ENCODE measurements at regions of chr11 and their contacts with region 1.

Region 1: GRCh38 chr11:85828008-85828847 is 17.3 kb upstream of the SYTL2 start:
- DNase-seq: no peak
- H3K4me3 Mint-ChIP-seq: no peak overlapping the region
- H3K27ac Mint-ChIP-seq: peak overlapping the region; percentile 87
- H3K4me1 Mint-ChIP-seq: peaks cover 44% of the 10 kb centered on the region
- H3K27me3 Mint-ChIP-seq: no peaks in the 10 kb centered on the region
- CTCF ChIP-seq: no peak

Region 2: DNA sequence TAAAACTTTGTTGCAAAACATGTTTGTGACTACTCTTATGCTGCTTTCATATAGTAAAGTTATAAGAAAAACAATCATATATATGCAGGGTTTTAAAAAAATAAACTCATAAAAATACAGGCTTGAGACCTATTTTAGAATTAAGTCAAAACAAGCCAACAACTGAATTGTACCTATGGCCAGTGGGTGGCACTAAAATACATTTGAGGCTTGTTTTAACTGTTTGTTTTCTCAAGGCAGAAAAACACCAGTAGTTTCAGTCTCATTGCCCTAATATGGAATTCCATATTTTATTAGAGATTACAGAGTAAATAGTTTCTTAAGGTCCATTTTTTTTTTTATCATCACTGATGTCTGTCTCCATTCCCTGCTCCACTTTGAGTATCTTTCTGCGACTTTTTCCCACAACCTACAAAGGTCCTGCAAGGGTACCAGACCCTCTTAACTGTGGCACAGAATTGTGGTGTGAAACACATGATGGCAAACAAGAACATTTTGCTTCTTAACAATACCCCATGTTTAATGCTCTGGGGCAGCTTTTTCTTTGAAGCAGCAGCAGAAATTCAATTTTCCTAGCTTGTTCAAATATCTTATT is 133.7 kb before region 1 on chr11:
- CTCF ChIA-PET with region 1: no interaction called
- intact Hi-C with region 1: loop called (anchors 2 kb)
- DNase-seq: peak; percentile 6
- H3K4me3 Mint-ChIP-seq: no peak overlapping the region
- H3K27ac Mint-ChIP-seq: no peak overlapping the region
- H3K4me1 Mint-ChIP-seq: peaks cover 18% of the 10 kb centered on the region
- H3K27me3 Mint-ChIP-seq: no peaks in the 10 kb centered on the region
- CTCF ChIP-seq: no peak

Region 3: DNA sequence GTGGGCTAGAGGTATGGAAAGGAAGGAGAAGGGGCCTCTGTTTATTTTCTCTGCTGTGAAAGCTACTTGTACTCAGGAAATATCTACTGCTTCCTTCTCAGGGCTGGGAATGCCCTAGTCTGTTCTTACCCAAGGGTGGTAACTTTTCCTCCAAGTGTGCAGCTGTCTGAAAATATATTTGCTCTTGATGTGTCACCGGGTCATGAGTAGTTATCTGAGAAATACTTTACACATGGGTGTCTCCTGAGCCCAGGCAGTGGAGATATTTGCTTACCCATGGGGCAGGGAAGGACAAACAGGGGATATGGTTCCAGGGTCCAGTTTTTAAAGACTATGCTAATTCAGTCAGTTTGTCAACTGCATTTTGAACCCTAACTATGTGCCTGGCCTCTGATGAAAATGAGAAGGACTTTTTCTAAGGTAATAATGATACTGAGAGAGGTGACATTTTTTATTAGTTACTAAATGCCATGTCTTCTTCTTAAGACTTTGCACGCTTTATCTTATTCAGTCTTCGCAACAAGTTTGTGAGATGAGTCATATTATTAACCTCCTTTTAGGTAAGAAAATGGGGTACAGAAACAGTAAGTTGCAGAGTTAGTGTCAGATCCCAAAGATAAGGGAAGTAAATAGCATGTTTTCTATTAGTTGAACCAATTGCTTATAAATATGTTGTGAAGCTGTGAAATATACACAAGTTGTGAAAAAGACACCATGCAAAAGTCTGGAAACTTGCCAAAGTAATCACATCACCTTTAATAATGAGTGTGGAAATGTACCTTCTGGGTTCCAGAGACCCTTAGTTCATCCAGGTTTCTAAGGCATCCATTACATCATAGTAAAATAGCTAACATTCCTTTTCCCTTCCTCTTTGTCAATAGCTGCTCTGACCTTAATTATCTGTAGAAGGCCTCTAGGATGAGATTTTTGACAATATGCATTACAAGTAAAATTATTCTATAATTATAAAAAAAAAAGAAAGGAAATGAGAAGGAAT is 40.1 kb before region 1 on chr11:
- CTCF ChIA-PET with region 1: no interaction called
- intact Hi-C with region 1: loop called (anchors 1 kb)
- DNase-seq: peak; percentile 28
- H3K4me3 Mint-ChIP-seq: no peak overlapping the region
- H3K27ac Mint-ChIP-seq: peak overlapping the region; percentile 66
- H3K4me1 Mint-ChIP-seq: peaks cover 24% of the 10 kb centered on the region
- H3K27me3 Mint-ChIP-seq: no peaks in the 10 kb centered on the region
- CTCF ChIP-seq: no peak

Region 4: GRCh38 chr11:85815186-85815931 is 12.9 kb before region 1 on chr11:
- CTCF ChIA-PET with region 1: no interaction called
- intact Hi-C with region 1: no loop called
- DNase-seq: no peak
- H3K4me3 Mint-ChIP-seq: no peak overlapping the region
- H3K27ac Mint-ChIP-seq: no peak overlapping the region
- H3K4me1 Mint-ChIP-seq: peaks cover 9% of the 10 kb centered on the region
- H3K27me3 Mint-ChIP-seq: no peaks in the 10 kb centered on the region
- CTCF ChIP-seq: no peak

Measured in Calu3 (cell line).